MCF 10A (cell line): ENCODE measurements at regions of chr6 and their contacts with region 1.

Region 1: DNA sequence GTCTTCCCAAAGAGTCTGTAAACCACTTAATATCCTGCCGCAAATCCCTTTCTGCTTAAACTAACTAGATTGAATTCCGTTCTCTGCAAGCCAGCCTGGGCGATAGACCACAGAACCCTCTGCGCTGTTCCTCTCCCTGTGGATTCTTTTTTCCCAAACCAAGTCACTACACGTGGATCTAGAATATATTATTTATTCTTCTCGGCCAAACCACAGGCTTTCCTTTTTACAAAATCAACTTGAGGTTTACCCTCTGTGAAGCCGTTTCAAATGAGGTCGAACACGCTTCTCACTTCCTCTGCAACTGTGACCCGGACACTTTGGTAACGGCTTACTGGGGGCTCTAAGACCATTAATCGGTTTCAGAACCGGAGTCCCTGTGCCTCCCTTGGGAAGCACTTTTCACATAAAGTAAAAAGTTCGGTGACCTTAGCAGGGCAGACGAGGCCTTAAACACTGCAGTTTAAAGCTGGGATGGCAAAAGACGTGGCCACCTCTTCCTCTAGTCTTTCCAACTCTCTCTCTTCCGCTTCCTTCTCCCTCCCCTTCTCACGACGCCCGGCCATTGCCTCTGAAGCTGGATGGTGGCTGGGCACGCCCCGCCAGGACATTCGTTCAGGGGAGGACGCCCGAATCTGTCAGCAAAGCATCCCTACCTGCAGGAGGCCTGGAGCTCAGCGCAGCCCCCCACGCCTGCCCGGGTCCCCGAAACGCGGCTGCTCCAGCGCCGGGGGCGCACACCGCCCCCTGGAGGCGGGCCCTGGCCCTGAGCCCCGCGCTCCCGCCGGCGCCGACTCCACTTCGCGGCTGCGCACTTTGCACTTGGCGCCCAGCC is 55.0 kb upstream of the FOXC1 start:
- DNase-seq: peak; percentile 74
- H3K4me3 Mint-ChIP-seq: peak overlapping the region; percentile 89
- H3K27ac Mint-ChIP-seq: peak overlapping the region; percentile 93
- H3K4me1 Mint-ChIP-seq: peaks cover 23% of the 10 kb centered on the region
- H3K27me3 Mint-ChIP-seq: no peaks in the 10 kb centered on the region
- CTCF ChIP-seq: peak; percentile 89

Region 2: DNA sequence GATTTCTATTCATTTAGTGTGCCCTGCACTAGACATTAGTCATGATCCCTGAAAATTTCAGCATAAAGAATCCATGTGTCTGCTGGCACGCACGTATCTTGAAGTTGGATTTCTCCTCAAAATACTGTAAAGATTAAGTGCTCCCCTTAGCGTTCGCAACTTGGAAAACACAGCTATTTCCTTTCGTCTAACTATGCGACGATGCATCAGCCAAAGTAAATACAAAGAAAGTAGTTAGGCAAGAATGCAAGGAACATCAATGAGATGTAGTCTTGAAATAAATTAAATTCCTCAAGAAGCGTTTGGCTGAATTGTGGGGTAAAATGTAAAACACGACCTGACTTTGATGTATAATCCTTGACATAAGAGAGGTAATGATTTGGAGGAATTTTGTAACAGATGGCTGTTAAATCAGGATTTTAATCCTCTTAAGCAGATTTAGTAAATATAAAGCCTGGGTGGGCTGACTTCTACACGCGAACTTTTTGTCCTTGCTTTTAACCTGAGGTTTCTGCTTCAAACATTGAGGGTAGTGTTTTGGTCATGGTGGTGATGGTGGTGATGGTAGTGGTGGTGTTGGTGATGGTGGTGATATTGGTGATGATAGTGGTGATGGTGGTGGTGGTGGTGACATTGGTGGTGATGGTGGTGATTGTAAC is 77.1 kb before region 1 on chr6:
- CTCF ChIA-PET with region 1: interaction called, 4 read pairs
- POLR2A ChIA-PET with region 1: interaction called, 7 read pairs
- intact Hi-C with region 1: loop called (anchors 10 kb)
- DNase-seq: peak; percentile 84
- H3K4me3 Mint-ChIP-seq: peak overlapping the region; percentile 47
- H3K27ac Mint-ChIP-seq: no peak overlapping the region
- H3K4me1 Mint-ChIP-seq: peaks cover 56% of the 10 kb centered on the region
- H3K27me3 Mint-ChIP-seq: no peaks in the 10 kb centered on the region
- CTCF ChIP-seq: no peak

Region 3: DNA sequence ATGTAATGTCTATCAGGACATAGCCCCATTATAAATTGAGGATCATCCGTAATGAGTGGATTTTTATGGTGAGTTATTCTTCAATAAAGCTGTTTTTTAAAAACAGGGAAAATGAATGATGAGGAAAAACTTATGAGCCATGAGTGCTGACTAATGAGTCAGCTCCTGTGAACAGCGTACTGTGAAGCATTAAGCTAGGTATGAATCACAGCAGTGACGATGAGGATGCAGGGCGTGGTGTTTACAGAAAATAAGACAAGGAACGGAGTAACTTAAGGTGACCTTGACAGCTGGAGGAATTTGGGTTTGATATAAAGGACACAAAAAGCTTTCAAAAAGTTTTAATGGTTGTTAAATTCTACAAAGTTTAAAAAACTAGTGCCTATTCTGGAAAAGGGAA is 69.0 kb before region 1 on chr6:
- CTCF ChIA-PET with region 1: interaction called, 4 read pairs
- POLR2A ChIA-PET with region 1: interaction called, 19 read pairs
- intact Hi-C with region 1: no loop called
- DNase-seq: peak; percentile 90
- H3K4me3 Mint-ChIP-seq: peak overlapping the region; percentile 4
- H3K27ac Mint-ChIP-seq: peak overlapping the region; percentile 88
- H3K4me1 Mint-ChIP-seq: peaks cover 27% of the 10 kb centered on the region
- H3K27me3 Mint-ChIP-seq: no peaks in the 10 kb centered on the region
- CTCF ChIP-seq: no peak

Region 4: DNA sequence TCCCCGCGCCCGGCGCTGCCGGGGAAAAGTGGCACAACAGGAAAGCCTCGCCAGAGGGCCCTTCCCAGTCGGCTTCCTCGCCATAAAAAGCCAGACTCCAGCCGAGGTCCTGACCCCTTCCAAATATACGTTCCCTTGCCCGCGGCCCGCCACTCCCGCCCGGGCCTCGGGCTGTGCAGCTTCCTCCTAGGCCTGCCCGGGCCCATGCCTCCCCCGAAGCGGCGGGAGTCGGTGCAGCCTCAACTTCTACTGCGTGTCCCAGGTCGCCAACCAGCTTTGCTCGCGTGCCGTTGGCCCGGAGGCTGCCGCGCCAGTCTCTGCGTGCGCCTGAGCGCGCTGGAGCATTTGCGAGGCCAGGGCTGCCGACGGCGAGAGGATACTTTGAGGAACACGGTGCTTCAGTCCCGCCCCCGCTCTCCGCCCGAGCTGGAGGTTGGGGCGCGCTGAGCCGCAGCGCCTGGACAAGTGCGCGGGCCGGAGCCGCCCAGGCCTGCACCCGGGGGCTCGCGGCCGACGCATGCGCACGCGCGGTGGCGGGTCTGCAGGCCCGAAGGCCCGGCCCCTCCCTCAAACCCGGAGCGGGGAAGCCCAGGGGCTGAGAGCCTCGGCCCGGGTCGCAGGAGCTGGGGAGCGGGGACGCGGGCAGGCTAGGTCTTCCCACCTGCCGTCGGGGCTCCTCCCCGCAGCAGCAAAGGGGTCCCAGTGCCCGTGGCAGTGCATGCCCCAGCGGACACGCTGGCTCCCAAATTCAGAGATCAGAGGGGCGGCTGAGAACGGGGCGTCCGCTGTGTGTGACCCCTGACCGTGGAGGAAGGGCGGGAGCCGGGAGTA is 65.2 kb after region 1 on chr6:
- CTCF ChIA-PET with region 1: no interaction called
- POLR2A ChIA-PET with region 1: no interaction called
- intact Hi-C with region 1: no loop called
- DNase-seq: no peak
- H3K4me3 Mint-ChIP-seq: no peak overlapping the region
- H3K27ac Mint-ChIP-seq: no peak overlapping the region
- H3K4me1 Mint-ChIP-seq: no peaks in the 10 kb centered on the region
- H3K27me3 Mint-ChIP-seq: no peaks in the 10 kb centered on the region
- CTCF ChIP-seq: no peak